Calu3 (cell line): ENCODE measurements at regions of chr6 and their contacts with region 1.

Region 1: DNA sequence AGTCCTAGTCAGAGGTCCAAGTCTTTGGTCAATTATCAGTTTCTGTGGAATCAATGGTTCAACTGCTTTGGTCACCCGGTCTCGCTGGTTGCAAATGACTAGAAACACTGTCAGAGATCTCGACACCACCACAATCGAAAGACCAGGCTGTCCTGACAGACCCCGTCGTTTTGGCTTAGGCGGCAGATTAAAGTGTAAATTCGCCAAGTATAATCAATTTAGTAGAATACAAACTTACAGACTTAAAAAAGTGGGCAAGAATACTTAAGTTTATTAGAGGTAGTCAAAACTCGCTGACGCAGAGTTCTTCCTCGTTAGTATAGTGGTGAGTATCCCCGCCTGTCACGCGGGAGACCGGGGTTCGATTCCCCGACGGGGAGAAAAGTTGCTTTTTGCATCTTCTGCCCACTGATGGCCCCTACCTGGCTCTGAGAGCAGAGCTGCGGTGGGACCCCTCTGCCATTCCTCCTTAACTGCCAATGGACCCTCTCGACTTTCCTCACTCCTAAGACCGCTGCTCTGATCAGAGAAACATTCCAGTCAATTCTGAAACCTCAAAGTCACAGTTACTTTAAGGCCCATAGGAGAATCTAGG is 30.6 kb upstream of the ZNF184 start:
- DNase-seq: peak; percentile 85
- H3K4me3 Mint-ChIP-seq: peak overlapping the region; percentile 83
- H3K27ac Mint-ChIP-seq: peak overlapping the region; percentile 87
- H3K4me1 Mint-ChIP-seq: peaks cover 40% of the 10 kb centered on the region
- H3K27me3 Mint-ChIP-seq: no peaks in the 10 kb centered on the region
- CTCF ChIP-seq: no peak

Region 2: DNA sequence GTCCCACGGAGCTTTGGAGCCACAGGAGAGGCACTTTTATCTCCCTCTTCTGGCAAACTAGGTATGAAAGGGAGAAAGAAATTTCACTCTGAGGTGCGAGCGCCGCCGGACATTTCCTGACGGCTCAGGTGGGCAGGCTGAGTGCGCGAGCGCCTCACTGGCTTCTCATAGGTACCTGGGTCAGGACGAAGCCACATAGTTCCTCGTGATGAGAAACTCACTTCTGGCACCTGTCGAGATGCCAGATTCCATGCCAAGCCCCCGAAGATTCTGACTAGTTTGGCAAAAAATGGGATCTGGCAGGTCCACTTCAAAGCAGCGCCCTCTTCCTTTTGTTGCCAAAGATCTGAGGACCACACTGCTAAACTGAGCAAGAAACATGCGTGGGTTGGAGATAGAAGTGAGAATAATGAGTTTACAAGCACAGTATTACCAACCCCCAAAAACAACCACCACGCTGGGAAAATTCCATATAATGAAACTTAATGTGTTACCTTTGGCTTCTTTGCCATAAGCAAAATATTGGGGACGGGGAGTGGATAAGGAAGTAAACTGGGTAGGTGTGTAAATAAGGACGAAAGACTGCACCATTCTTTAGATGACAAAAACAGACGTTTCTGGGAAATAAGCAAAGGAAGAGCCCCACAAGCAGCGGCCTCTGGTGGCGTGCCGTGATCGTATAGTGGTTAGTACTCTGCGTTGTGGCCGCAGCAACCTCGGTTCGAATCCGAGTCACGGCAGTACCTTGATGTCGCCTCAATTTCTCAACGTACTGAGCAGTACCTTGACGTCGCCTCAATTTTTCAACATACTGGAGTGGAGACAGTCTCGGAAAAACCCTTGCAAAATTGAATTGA is 345.8 kb before region 1 on chr6:
- CTCF ChIA-PET with region 1: no interaction called
- intact Hi-C with region 1: loop called (anchors 5 kb)
- DNase-seq: peak; percentile 79
- H3K4me3 Mint-ChIP-seq: peak overlapping the region; percentile 81
- H3K27ac Mint-ChIP-seq: peak overlapping the region; percentile 79
- H3K4me1 Mint-ChIP-seq: peaks cover 27% of the 10 kb centered on the region
- H3K27me3 Mint-ChIP-seq: no peaks in the 10 kb centered on the region
- CTCF ChIP-seq: peak; percentile 51

Region 3: DNA sequence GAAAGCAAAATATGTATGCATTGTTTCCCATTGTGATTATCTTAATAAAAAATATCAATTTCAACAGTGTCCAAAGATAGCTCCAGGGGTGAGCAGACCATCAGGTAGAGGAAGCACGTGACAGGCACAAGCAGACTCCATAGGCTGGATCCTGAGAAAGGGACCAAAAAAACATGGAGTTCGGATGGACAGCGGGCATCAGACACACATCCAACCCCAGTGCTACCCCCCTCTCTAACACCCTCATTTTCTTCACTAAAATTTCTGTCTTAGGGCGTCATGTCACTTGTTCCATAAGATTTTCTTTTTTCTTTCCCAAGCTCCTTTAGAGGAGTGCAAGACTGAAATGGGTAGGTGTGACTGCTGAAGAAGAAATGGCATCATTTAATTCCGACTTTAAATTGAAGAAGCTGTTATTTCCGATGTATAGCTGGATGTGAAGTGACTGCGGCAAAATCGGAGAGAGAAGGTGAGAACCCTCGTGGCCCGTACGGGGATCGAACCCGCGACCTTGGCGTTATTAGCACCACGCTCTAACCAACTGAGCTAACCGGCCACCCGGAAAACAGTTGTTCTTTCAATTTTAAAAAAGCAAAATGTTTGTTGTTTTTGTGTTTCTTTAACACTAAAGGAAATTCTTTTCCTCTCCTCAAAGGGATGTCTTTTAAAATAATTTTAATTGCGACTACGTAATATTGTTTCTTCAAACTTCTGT is 266.3 kb before region 1 on chr6:
- CTCF ChIA-PET with region 1: no interaction called
- intact Hi-C with region 1: loop called (anchors 5 kb)
- DNase-seq: peak; percentile 69
- H3K4me3 Mint-ChIP-seq: peak overlapping the region; percentile 20
- H3K27ac Mint-ChIP-seq: peak overlapping the region; percentile 50
- H3K4me1 Mint-ChIP-seq: peaks cover 39% of the 10 kb centered on the region
- H3K27me3 Mint-ChIP-seq: peaks cover 2% of the 10 kb centered on the region
- CTCF ChIP-seq: no peak

Region 4: DNA sequence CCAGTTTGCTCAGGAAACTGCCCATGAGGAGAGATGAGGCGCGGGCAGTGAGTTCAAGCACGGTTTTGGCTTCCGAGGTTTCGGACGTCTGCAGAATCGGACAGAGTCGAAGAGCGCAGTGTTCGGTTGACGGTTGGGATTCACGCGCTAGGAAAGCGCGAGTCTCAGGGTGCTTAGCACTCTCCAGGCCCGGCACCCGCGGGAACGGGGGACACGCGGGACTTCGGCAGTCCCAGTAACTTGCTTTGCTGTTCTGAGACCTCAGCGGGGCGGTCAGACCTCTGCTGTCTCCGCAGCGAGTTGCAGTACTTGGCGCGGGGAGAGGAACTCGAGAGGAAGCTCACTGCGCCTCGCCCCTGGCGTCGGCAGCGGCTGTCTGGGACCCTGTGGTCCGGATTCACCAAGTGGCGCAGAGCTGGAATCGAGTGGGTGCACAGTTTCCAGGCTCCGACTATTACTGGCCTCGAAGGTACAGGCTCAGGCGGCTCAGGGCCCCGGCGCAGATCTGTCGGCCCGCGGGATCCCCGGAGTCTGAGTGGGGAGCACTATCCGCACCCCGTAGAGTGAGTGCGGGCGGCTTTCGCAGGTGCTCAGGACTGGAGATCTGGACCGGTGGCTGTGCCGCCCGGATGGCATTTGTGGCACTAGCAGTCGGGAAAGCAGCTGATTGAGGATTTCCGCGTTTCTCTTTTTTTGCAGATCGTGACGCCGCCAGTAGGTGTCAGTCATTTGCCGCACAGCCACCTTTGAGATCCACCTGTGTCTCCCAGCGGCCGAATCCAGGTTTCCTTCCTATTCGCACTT is 191.2 kb before region 1 on chr6 and contains the start of gene POM121L2:
- CTCF ChIA-PET with region 1: no interaction called
- intact Hi-C with region 1: loop called (anchors 5 kb)
- DNase-seq: peak; percentile 84
- H3K4me3 Mint-ChIP-seq: peak within 1 kb of the TSS; percentile 65
- H3K27ac Mint-ChIP-seq: no peak within 1 kb of the TSS
- H3K4me1 Mint-ChIP-seq: no peaks in the 10 kb centered on the region
- H3K27me3 Mint-ChIP-seq: no peaks in the 10 kb centered on the region
- CTCF ChIP-seq: peak; percentile 87
- total RNA-seq, gene POM121L2: not detected in 2 replicates

Region 5: GRCh38 chr6:27479319-27480182 is 24.0 kb before region 1 on chr6:
- CTCF ChIA-PET with region 1: no interaction called
- intact Hi-C with region 1: loop called (anchors 1 kb)
- DNase-seq: peak; percentile 88
- H3K4me3 Mint-ChIP-seq: no peak overlapping the region
- H3K27ac Mint-ChIP-seq: no peak overlapping the region
- H3K4me1 Mint-ChIP-seq: no peaks in the 10 kb centered on the region
- H3K27me3 Mint-ChIP-seq: no peaks in the 10 kb centered on the region
- CTCF ChIP-seq: no peak

Region 6: GRCh38 chr6:27518881-27519795 is 15.6 kb after region 1 on chr6:
- CTCF ChIA-PET with region 1: interaction called, 4 read pairs
- intact Hi-C with region 1: loop called (anchors 2 kb)
- DNase-seq: peak; percentile 72
- H3K4me3 Mint-ChIP-seq: peak overlapping the region; percentile 94
- H3K27ac Mint-ChIP-seq: peak overlapping the region; percentile 99
- H3K4me1 Mint-ChIP-seq: peaks cover 9% of the 10 kb centered on the region
- H3K27me3 Mint-ChIP-seq: no peaks in the 10 kb centered on the region
- CTCF ChIP-seq: peak; percentile 60

Region 7: DNA sequence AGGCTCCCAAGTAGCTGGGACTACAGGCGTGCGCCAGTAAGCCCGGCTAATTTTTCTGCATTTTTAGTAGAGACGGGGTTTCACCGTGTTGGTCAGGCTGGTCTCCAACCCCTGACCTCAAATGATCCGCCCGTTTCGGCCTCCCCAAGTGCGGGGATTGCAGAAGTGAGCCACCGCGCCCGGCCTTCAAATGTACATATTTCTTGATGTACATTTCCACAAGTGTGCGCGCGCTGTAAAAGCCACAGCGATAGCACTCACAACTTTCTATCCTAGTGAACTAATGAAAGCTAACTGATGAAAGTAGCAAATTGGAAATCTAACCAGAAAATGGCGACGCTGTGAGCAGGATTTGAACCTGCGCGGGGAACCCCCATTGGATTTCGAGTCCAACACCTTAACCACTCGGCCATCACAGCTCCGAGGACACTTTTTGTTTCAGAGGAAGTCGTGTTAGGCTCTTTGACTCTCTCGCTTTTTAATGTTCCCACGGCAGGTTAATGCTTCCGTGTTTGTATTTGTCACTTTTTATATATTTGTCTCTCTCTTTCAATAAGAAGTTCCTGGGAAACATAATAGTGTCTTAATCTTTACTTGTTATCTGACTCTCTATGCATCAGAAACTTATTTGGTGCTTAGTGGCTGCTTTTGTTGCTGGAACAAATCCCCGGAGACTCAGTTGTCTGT is 168.7 kb after region 1 on chr6:
- CTCF ChIA-PET with region 1: no interaction called
- intact Hi-C with region 1: loop called (anchors 5 kb)
- DNase-seq: peak; percentile 85
- H3K4me3 Mint-ChIP-seq: peak overlapping the region; percentile 60
- H3K27ac Mint-ChIP-seq: peak overlapping the region; percentile 78
- H3K4me1 Mint-ChIP-seq: peaks cover 36% of the 10 kb centered on the region
- H3K27me3 Mint-ChIP-seq: no peaks in the 10 kb centered on the region
- CTCF ChIP-seq: no peak